GM12878 (cell line): ENCODE measurements at regions of chr1 and their contacts with region 1.

Region 1: DNA sequence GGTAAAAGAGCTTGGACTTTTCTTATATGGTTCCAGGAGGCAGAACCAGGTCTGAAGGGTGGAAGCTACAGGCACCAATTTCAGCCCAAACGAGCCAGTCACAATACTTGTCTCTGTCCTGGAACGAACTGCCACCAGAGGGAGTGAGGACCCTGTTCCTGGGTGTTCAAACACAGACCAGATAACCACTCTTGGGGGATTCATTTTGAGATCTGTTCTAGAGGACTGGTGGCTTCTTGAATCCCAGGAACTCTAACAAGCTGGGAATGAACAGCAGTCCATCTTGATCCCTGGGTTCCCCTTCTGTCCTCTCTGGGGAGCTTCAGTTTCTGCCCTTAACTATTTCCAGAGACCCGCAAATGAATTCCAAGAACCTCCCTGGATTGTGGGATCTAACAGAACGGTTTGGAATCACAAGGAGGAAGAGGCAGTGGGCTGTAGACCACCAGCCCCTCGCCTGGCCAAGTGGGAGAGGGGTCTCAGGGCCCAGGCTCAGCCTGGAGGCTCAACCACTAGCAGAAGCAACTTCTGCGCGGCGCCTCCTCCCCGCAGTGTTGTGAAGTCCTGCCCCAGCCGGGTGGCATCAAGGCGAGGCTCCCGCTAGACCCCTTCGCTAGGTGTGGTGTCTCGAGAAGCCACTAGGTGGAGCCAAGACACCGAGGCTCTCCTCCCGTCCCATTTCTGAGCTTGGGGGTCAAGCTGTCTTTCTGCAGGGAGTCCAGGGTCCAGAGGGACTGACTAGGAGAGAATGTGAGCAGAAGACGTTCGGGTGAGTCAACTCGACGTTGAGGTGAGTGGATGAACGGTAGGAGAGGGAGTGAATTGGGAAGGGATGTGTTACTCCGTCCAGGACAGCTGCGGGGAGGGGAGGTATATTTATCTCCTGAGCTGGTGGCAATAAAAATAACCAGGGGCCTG is 12.1 kb upstream of the NES start:
- DNase-seq: no peak
- ATAC-seq: peak; percentile 97
- H3K4me3 ChIP-seq: no peak overlapping the region
- H3K27ac ChIP-seq: no peak overlapping the region
- H3K4me1 ChIP-seq: peaks cover 4% of the 10 kb centered on the region
- H3K27me3 ChIP-seq: peaks cover 18 to 33% of the 10 kb centered on the region in 2 experiments
- CTCF ChIP-seq: peak; percentile 92 to 97 (median 97)
- EP300 ChIP-seq: no peak
- POLR2A ChIP-seq: no peak
- RAD21 ChIP-seq: peak; percentile 91

Region 2: GRCh38 chr1:156659994-156660751 is 29.1 kb before region 1 on chr1:
- CTCF ChIA-PET with region 1: interaction called, 192 read pairs
- POLR2A ChIA-PET with region 1: no interaction called
- RAD21 ChIA-PET with region 1: interaction called, 22 read pairs
- SMC1A ChIA-PET with region 1: interaction called, 9 read pairs
- in situ Hi-C with region 1: no loop called
- intact Hi-C with region 1: no loop called
- DNase-seq: peak; percentile 70
- ATAC-seq: peak; percentile 84
- H3K4me3 ChIP-seq: peak overlapping the region; percentile 94
- H3K27ac ChIP-seq: peak overlapping the region; percentile 90
- H3K4me1 ChIP-seq: peaks cover 74% of the 10 kb centered on the region
- H3K27me3 ChIP-seq: 0 out of 4 replicates have a peak, but pooled peaks cover 0 to 2% of the 10 kb centered on the region in 2 experiments
- CTCF ChIP-seq: peak; percentile 99 to 100 (median 100); a peak in 5 of 6 replicates
- EP300 ChIP-seq: no peak
- POLR2A ChIP-seq: peak; percentile 69
- RAD21 ChIP-seq: peak; percentile 81

Region 3: DNA sequence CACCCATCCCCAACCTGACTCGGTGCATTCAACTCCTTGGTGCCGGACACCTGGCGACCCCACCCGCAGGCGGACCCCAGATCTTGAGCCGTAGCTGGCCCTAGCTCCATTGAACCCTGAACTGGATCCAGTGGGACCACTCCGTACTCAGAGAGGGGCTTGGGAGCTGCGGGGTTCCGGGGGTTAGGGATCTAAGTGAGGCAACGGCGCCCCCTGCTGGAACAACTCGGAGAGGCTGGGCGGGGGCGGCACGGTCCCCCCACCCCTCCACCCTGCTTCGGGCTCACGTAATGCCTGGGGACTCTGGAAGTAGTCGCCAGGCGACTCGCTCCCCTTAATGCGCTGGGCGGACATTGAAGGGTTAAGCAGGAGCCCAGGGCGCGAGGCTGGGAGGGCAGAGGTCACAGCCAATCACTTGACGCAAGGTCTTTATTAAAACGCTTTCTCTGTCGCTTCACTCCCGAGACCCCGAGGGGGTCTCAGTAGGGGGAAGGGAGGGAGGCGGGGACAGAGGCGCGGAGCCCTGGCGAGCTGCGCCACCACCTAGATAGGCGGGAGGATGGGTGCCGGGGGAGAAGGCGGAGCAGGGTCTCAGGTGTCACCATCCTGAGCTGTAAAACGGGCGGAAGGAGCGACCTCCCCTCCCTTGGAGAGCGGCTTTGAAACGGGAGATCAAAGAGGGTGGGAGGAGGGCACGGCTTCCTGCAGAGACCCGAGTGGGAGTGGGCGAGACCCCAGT is 16.8 kb after region 1 on chr1:
- CTCF ChIA-PET with region 1: interaction called, 157 read pairs
- POLR2A ChIA-PET with region 1: no interaction called
- RAD21 ChIA-PET with region 1: interaction called, 28 read pairs
- SMC1A ChIA-PET with region 1: interaction called, 11 read pairs
- in situ Hi-C with region 1: no loop called
- intact Hi-C with region 1: no loop called
- DNase-seq: no peak
- ATAC-seq: peak; percentile 81
- H3K4me3 ChIP-seq: peak overlapping the region; percentile 35; the same call in 1 of the 2 replicates
- H3K27ac ChIP-seq: no peak overlapping the region
- H3K4me1 ChIP-seq: peaks cover 6% of the 10 kb centered on the region
- H3K27me3 ChIP-seq: peaks cover 10 to 15% of the 10 kb centered on the region in 2 experiments
- CTCF ChIP-seq: peak; percentile 60 to 74 (median 67)
- EP300 ChIP-seq: no peak
- POLR2A ChIP-seq: peak; percentile 11; the same call in 1 of the 2 replicates
- RAD21 ChIP-seq: peak; percentile 53

Region 4: GRCh38 chr1:156740679-156741612 is 51.7 kb after region 1 on chr1 and contains the start of gene MRPL24:
- CTCF ChIA-PET with region 1: interaction called, 10 read pairs
- POLR2A ChIA-PET with region 1: no interaction called
- RAD21 ChIA-PET with region 1: interaction called, 8 read pairs
- SMC1A ChIA-PET with region 1: no interaction called
- in situ Hi-C with region 1: no loop called
- intact Hi-C with region 1: no loop called
- DNase-seq: peak; percentile 99
- ATAC-seq: peak; percentile 93
- H3K4me3 ChIP-seq: peak within 1 kb of the TSS; percentile 68
- H3K27ac ChIP-seq: peak within 1 kb of the TSS; percentile 76
- H3K4me1 ChIP-seq: peaks cover 5% of the 10 kb centered on the region
- H3K27me3 ChIP-seq: no peaks in the 10 kb centered on the region
- CTCF ChIP-seq: no peak
- EP300 ChIP-seq: no peak; a peak in 2 of 4 replicates
- POLR2A ChIP-seq: peak; percentile 89
- RAD21 ChIP-seq: no peak
- polyA plus RNA-seq, gene MRPL24: 245 to 269 TPM

Region 5: DNA sequence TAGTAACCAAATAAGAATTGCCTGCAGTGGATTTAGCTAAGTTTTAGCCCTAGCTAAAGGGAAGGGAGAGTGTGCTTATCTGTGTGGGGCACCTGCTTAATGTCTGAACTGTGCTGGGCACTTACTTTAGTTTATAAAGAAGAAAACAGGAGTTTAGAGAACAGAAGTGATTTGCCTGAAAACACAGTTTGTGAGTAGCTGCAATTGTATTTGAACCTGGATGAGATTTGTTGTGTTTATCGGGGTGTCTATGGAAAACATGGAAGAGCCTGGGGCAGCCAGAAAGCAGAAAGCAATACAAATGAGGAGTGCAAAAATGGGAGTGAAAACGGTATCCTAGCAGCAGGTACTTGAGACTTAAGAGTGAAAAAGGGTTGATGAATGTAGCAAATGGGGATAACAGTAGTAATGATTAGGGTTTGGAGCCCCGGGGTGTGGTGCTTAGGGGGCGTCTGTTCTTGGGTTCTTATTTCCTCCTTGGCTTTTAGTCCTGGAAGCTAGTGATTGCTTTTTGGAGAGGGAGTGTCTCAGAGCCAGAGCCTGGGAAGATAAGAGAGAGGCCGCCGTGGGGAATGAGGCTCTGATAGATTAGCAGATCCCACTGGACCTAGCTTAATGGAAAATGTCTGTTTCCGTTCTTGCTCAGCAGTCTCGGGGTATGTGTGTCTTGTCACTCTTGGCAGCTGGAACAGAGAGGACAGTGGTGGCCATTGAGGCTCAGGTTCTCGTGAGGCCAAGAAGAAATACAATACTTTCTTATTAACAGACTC is 83.6 kb after region 1 on chr1:
- CTCF ChIA-PET with region 1: interaction called, 11 read pairs
- POLR2A ChIA-PET with region 1: no interaction called
- RAD21 ChIA-PET with region 1: interaction called, 4 read pairs
- SMC1A ChIA-PET with region 1: interaction called, 3 read pairs
- in situ Hi-C with region 1: no loop called
- intact Hi-C with region 1: no loop called
- DNase-seq: no peak
- ATAC-seq: peak; percentile 6; the same call in 2 of the 3 replicates
- H3K4me3 ChIP-seq: peak overlapping the region; percentile 42; the same call in 1 of the 2 replicates
- H3K27ac ChIP-seq: no peak overlapping the region
- H3K4me1 ChIP-seq: no peaks in the 10 kb centered on the region
- H3K27me3 ChIP-seq: no peaks in the 10 kb centered on the region
- CTCF ChIP-seq: no peak
- EP300 ChIP-seq: no peak
- POLR2A ChIP-seq: no peak
- RAD21 ChIP-seq: no peak

Region 6: DNA sequence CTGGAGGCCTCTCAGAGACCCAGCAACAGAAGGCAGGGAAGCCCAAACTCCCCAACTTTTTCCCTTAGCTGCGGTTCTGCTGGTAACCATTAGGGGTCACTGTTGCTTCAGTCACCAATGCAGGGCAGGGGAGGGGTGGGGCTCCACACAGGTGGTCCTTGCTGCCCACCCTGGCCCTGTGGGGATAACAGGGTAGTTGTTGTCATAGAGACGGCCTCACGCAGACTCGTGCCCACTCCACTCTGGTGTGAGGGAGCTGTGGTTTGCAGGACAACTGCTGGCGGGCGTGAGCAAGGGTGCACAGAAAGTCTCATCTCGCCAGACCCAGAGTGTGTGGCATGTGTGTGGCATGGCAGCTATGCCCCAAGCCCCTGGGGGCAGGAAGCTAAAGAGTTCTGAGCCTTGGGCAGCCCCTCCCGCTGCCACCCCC is 149.7 kb after region 1 on chr1:
- CTCF ChIA-PET with region 1: interaction called, 31 read pairs
- POLR2A ChIA-PET with region 1: no interaction called
- RAD21 ChIA-PET with region 1: interaction called, 6 read pairs
- SMC1A ChIA-PET with region 1: interaction called, 6 read pairs
- in situ Hi-C with region 1: no loop called
- intact Hi-C with region 1: no loop called
- DNase-seq: no peak
- ATAC-seq: peak; percentile 57
- H3K4me3 ChIP-seq: no peak overlapping the region
- H3K27ac ChIP-seq: no peak overlapping the region
- H3K4me1 ChIP-seq: peaks cover 24% of the 10 kb centered on the region
- H3K27me3 ChIP-seq: no peaks in the 10 kb centered on the region; a peak in 1 of 4 replicates
- CTCF ChIP-seq: peak; percentile 80 to 94 (median 91)
- EP300 ChIP-seq: no peak
- POLR2A ChIP-seq: no peak
- RAD21 ChIP-seq: peak; percentile 86

Region 7: GRCh38 chr1:156892190-156893047 is 203.1 kb after region 1 on chr1:
- CTCF ChIA-PET with region 1: interaction called, 83 read pairs
- POLR2A ChIA-PET with region 1: no interaction called
- RAD21 ChIA-PET with region 1: interaction called, 33 read pairs
- SMC1A ChIA-PET with region 1: interaction called, 23 read pairs
- in situ Hi-C with region 1: no loop called
- intact Hi-C with region 1: loop called (anchors 1 kb)
- DNase-seq: no peak
- ATAC-seq: peak; percentile 95
- H3K4me3 ChIP-seq: no peak overlapping the region
- H3K27ac ChIP-seq: no peak overlapping the region
- H3K4me1 ChIP-seq: no peaks in the 10 kb centered on the region
- H3K27me3 ChIP-seq: peaks cover 5 to 11% of the 10 kb centered on the region in 2 experiments
- CTCF ChIP-seq: peak; percentile 63 to 87 (median 68)
- EP300 ChIP-seq: no peak
- POLR2A ChIP-seq: no peak
- RAD21 ChIP-seq: peak; percentile 38; the same call in 1 of the 2 replicates